Activated CD8-positive, alpha-beta T cell treated with anti-CD3 and anti-CD28 coated beads for 36 hours (primary cell): ENCODE measurements at regions of chr18 and their contacts with region 1.

Region 1: DNA sequence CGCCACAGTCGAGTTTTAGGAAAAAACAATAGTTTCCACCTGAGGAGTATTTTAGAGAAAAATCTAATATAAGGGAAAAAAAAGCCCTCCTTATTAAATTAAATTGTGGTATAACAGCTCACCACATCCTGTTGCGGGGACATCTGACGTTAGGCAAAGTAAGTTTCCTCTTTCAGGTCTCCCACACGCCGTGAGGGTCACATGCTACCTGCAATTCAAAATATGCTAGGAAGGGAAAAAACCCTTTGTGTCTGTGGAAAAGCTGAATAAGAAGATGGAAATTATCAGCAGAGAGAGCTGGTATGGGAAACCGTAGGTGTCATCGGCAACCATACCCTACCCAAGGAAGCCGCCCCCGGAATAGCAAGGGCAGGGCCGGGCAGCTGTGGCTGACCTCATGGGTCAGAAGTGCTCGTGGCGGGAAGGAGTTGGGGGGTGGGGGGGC is 128.0 kb downstream of the NFATC1 start:
- DNase-seq: peak; percentile 96
- ATAC-seq: peak; percentile 50
- H3K4me3 Mint-ChIP-seq: peak overlapping the region; percentile 78
- H3K27ac Mint-ChIP-seq: peak overlapping the region; percentile 100
- H3K4me1 Mint-ChIP-seq: peaks cover 60% of the 10 kb centered on the region
- H3K27me3 Mint-ChIP-seq: no peaks in the 10 kb centered on the region
- CTCF ChIP-seq: no peak

Region 2: DNA sequence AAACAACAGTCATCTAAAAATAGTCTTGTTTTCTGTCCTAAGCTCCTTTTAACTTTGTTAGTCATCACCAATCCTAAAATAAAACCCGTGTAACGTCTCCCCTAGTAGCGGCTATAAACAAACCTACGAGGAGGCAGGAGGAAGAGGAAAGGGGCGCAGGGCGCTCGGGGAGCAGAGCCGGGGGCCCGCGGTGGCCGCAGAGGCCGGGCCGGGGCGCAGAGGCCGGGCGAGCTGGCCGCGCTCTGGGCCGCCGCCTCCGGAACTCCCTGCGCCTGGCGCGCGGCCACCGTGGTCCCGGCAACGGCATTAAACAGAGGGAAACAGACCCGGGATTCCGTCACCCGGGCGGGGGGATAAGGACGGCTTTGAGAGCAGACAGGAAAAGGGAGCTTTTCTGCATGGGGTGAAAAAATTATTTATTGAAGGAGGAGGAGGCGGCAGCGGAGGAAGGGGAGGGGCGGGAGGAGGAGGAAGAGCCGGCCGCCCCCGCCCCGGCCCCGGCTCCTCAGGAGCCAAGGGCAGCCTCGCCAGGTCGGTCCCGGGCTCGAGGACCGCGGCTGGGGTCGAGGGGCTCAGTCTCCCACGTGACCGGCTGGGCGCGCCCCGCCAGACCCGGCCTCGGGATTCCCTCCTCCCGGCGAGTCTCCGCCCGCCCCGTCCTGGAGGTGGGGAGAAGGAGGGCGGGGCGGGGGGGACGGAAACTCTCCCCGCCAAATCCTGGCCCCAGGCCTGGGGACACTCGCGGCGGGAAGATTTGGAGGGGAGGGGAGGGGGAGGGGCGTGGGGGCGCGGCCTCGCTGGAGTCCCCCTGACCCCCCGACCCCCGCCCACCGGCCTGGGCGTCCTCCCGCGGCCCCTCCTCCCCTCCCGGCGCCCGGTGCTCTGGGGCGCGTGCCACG is 129.9 kb before region 1 on chr18:
- CTCF ChIA-PET with region 1: interaction called, 10 read pairs
- POLR2A ChIA-PET with region 1: interaction called, 25 read pairs
- intact Hi-C with region 1: loop called (anchors 5 kb)
- DNase-seq: peak; percentile 66
- ATAC-seq: peak; percentile 12
- H3K4me3 Mint-ChIP-seq: peak overlapping the region; percentile 76
- H3K27ac Mint-ChIP-seq: peak overlapping the region; percentile 84
- H3K4me1 Mint-ChIP-seq: peaks cover 18% of the 10 kb centered on the region
- H3K27me3 Mint-ChIP-seq: peaks cover 15% of the 10 kb centered on the region
- CTCF ChIP-seq: no peak

Region 3: GRCh38 chr18:79400091-79400590 is 123.6 kb before region 1 on chr18:
- CTCF ChIA-PET with region 1: interaction called, 13 read pairs
- POLR2A ChIA-PET with region 1: interaction called, 25 read pairs
- intact Hi-C with region 1: loop called (anchors 5 kb)
- DNase-seq: peak; percentile 78
- ATAC-seq: no peak
- H3K4me3 Mint-ChIP-seq: peak overlapping the region; percentile 94
- H3K27ac Mint-ChIP-seq: no peak overlapping the region
- H3K4me1 Mint-ChIP-seq: peaks cover 42% of the 10 kb centered on the region
- H3K27me3 Mint-ChIP-seq: no peaks in the 10 kb centered on the region
- CTCF ChIP-seq: no peak

Region 4: DNA sequence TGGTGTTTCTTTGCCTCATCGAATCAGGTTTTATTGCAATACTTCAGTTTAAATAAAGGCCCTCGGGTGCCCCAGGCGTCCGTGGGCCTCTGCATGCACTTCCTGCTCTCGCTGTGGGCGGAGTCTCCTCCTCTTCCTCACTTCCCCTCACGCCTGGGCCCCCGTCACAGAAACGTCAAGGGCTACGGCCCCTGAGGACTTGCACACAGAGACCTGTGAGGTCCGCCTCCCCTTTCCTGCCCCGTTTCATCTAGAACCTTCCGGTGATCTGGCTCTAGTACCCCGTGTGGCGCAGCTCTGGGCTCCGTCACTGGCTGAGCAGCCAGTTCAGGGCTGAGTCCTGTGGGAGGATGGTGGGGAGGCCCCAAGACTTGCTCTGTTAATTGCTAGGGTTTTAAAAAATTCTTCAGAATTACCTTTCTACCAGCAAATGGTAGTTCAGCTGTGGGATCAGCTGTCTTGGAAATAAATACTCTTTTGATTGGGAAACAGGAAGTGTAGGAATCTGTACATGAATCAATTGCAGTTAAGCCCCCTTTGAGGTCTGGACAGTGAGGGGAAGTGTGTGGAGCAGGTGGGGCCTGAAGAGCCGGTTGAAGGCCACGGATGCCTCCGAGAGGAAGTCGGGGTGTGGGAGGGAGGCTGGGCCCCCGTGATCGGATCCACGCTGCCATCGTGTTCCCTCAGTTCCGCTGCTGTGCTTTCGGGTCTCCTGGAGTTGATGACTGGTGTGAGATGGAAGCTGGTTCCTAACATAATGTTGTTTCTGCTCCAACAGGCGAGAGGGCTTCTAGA is 117.8 kb before region 1 on chr18:
- CTCF ChIA-PET with region 1: interaction called, 13 read pairs
- POLR2A ChIA-PET with region 1: interaction called, 9 read pairs
- intact Hi-C with region 1: no loop called
- DNase-seq: peak; percentile 96
- ATAC-seq: peak; percentile 90
- H3K4me3 Mint-ChIP-seq: peak overlapping the region; percentile 84
- H3K27ac Mint-ChIP-seq: peak overlapping the region; percentile 91
- H3K4me1 Mint-ChIP-seq: peaks cover 57% of the 10 kb centered on the region
- H3K27me3 Mint-ChIP-seq: no peaks in the 10 kb centered on the region
- CTCF ChIP-seq: no peak

Region 5: DNA sequence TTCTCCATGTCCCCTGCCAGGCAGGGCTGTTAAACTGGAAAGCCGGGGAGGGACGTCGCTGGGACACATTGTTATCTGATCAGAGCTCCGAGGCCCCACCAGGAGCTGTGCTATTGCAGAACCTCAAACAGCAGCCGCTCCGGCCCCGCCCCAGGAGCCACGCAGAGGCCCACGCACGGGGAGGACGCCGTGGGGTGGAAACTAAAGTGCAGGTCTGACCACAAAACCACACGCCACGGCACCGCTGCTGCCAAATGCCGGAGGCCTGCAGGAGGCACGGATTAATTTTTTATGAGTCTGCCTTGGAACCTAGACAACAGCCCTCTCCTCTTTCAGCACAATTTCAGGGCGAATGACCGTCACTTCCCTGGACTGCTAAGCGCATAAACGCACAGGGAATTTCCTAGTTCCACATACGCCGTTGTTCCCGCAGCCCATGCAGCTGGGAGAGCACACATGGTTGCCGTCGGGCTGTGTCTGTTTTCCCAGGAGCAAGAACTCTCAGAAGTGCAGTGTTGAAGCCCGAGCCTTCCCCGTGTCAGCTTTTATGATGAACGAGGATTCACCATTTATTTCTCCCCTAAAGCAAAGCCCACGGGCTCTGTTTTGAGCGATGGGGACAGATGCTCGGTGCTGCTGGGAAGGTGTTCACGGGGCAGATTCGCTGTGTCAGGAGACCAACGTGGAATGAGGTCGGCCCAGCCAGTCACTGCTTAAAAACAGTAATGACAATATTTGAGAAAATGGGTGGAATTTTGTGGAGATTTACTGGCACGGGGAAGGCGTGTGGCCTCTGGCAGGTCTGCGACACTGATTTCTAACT is 84.3 kb before region 1 on chr18:
- CTCF ChIA-PET with region 1: interaction called, 11 read pairs
- POLR2A ChIA-PET with region 1: interaction called, 10 read pairs
- intact Hi-C with region 1: no loop called
- DNase-seq: peak; percentile 43
- ATAC-seq: peak; percentile 19
- H3K4me3 Mint-ChIP-seq: no peak overlapping the region
- H3K27ac Mint-ChIP-seq: no peak overlapping the region
- H3K4me1 Mint-ChIP-seq: peaks cover 59% of the 10 kb centered on the region
- H3K27me3 Mint-ChIP-seq: no peaks in the 10 kb centered on the region
- CTCF ChIP-seq: no peak

Region 6: DNA sequence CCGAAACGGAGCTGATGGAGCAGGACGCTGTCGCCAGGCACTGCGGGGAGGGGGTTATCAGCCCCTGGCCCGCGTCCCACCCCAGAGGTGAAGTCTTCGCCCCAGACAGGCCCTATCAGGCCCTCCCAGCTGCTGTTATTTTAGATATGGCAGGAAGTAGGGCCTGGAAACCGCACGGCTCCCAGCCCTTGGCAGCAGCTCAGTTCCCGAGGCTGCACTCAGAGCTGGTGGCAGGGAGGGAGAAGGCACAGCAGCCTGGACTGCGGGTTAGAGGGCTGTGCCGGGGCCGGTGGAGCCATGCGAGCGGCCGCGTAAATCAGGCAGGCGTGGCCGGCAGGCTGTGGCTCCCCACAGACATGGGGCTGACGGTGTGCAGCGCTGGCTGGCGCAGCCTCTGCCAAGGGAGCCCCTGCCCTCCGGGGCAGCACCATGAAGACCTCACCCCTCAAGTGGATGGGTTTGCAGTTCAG is 16.6 kb before region 1 on chr18:
- CTCF ChIA-PET with region 1: interaction called, 8 read pairs
- POLR2A ChIA-PET with region 1: interaction called, 24 read pairs
- intact Hi-C with region 1: no loop called
- DNase-seq: peak; percentile 43
- ATAC-seq: peak; percentile 43
- H3K4me3 Mint-ChIP-seq: peak overlapping the region; percentile 63
- H3K27ac Mint-ChIP-seq: peak overlapping the region; percentile 90
- H3K4me1 Mint-ChIP-seq: peaks cover 64% of the 10 kb centered on the region
- H3K27me3 Mint-ChIP-seq: no peaks in the 10 kb centered on the region
- CTCF ChIP-seq: no peak

Region 7: DNA sequence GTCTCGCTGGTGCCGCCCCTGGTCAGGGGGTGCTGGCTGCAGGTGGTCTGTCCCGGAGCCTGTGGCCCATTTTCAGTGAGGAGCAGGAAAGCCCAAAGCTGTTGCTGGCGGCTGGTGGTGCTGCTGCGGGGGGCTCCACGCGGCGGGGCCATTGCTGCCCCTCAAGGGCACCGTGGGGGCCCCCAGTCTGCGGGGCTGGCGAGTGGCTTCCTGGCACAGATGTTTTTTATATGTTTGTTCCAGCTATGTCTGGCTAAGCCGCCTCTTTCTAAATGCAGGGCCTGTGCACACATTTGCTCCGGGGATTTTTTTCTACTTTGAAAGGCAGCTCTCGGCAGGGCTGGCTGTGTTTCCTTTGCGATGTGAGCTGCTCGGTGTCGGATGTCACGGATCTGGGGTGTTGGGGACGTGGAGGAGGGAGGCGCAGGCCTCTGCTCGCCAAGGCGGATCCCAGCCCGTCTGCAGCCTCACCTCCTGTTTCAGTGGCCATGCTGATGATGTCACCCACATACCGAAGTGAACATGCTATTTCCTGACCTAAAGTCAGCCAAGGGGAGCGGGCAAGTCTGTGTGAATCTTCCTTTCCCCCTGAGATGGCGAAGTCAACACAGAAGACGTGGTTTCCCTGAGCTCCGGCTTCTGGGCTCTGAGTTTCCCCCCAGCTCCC is 43.9 kb after region 1 on chr18:
- CTCF ChIA-PET with region 1: no interaction called
- POLR2A ChIA-PET with region 1: no interaction called
- intact Hi-C with region 1: no loop called
- DNase-seq: no peak
- ATAC-seq: no peak
- H3K4me3 Mint-ChIP-seq: no peak overlapping the region
- H3K27ac Mint-ChIP-seq: no peak overlapping the region
- H3K4me1 Mint-ChIP-seq: peaks cover 7% of the 10 kb centered on the region
- H3K27me3 Mint-ChIP-seq: peaks cover 2% of the 10 kb centered on the region
- CTCF ChIP-seq: no peak

Region 8: DNA sequence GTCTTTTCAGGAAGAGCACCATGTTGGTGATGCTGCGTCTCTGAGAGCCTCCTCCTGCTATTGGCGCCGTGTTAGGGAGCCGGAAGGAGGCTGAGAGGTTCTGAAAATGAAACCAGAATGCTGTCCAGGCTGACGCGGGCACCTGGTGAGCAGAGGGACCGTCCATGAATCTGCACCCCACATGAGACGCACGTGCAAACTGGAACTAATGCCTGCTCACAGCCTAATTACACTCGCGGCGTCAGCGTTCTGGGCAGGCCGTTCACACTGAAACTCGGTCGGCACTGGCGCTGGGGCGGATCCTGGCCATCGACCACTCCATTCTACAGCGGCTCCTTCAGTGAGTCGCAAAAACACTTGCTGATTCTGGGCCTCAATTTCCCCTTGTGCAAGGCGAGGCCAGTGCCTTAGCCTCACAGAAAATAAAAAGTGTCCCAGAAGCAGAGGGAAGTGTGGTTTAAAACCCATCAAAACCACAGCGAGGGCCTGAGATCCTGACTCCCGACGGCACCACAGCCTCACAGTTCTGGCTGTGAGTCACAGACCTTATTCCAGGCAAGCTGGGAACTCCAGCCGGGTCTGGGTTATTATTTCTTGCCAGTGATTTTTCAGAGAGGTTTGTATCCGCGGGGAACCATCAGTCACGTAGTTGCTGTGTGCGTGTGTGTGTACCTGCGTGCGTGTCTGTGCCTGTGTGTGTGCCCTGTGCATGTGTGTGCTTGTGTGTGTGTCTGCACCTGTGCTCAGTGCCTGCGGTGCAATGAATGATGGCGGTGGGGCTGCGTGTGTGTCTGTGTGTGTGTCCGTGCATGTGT is 106.7 kb after region 1 on chr18:
- CTCF ChIA-PET with region 1: no interaction called
- POLR2A ChIA-PET with region 1: no interaction called
- intact Hi-C with region 1: no loop called
- DNase-seq: no peak
- ATAC-seq: no peak
- H3K4me3 Mint-ChIP-seq: no peak overlapping the region
- H3K27ac Mint-ChIP-seq: no peak overlapping the region
- H3K4me1 Mint-ChIP-seq: peaks cover 9% of the 10 kb centered on the region
- H3K27me3 Mint-ChIP-seq: peaks cover 3% of the 10 kb centered on the region
- CTCF ChIP-seq: no peak